H1 (cell line): ENCODE measurements at regions of chr1 and their contacts with region 1.

Region 1: DNA sequence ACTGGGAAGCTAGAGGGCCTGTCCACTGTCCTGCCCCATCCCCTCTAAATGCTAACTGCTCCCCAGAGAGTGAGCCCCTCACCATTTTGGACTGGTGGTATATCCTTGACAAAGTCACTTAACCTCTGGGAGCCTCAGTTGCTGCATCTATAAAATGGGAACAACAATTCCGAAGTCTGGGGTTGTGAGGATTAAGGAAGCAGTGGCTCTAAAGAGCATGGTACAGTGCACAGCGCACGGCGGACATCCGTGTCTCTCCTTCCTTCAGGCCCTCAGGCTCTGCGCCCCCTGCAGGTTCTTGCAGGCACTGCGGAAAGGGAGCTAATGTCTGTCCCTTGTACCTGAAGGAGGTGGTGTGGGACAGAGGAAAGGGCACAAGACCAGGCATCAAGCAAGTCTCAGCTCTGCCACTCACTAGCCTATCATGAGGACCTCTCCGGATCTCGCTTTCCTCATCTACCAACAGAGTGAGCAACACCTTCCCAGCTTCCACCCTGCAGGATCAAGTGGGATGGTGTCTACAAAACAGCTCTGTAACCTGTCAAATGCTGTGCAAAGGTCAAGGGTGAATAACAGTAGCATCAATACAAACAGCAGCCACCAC is 20.1 kb downstream of the ECE1 start:
- DNase-seq: peak; percentile 63 to 99
- H3K4me3 ChIP-seq: no peak overlapping the region
- H3K27ac ChIP-seq: no peak overlapping the region
- H3K4me1 ChIP-seq: no peaks in the 10 kb centered on the region; a peak in 2 of 7 replicates
- H3K27me3 ChIP-seq: no peaks in the 10 kb centered on the region
- CTCF ChIP-seq: peak; percentile 99 to 100 (median 100)
- EP300 ChIP-seq: no peak
- POLR2A ChIP-seq: no peak
- RAD21 ChIP-seq: peak; percentile 79 to 84

Region 2: DNA sequence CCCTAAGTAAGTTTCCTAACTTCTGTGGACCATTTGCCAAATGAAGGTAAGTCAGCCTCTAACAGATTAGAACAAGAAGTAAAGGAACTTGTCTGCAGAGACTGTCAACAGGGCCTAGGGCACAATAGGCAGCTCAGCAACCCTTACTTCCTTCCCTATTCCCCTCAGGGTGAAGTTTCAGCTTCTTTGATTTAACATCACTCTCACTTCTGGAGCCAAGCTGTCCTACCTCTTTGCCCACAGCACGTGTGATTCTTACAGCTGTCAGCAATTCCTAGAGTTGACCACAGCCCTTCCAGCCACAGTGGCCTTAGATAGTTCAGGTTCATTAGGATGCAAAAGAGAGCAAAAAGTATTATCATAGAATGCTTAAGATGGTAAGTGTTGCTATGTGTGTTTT is 85.9 kb before region 1 on chr1:
- CTCF ChIA-PET with region 1: no interaction called
- POLR2A ChIA-PET with region 1: no interaction called
- DNase-seq: no peak
- H3K4me3 ChIP-seq: no peak overlapping the region
- H3K27ac ChIP-seq: no peak overlapping the region
- H3K4me1 ChIP-seq: no peaks in the 10 kb centered on the region
- H3K27me3 ChIP-seq: peaks cover 28 to 59% (median 52%) of the 10 kb centered on the region in 4 experiments
- CTCF ChIP-seq: no peak
- EP300 ChIP-seq: no peak
- POLR2A ChIP-seq: no peak
- RAD21 ChIP-seq: no peak

Region 3: DNA sequence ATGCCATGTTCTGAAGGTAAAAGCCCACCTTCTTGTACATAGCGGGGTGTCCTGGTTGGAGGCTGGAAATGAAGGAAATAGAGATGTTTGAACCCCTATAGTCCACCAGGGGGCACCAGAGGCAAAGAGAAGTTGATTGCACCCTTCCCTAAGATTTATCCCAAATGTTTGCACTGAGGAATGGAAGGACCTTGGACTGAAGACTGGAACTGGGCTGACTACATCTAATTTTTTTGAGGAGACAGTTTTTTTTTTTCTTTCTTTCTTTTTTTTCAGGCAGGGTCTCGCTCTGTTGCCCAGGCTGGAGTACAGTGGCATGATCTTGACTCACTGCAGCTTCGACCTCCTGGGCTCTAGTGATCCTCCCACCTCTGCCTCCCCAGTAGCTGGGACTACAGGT is 38.1 kb before region 1 on chr1:
- CTCF ChIA-PET with region 1: interaction called, 67 read pairs
- POLR2A ChIA-PET with region 1: no interaction called
- DNase-seq: peak in 1 of 2 experiments; percentile 59
- H3K4me3 ChIP-seq: no peak overlapping the region
- H3K27ac ChIP-seq: no peak overlapping the region
- H3K4me1 ChIP-seq: no peaks in the 10 kb centered on the region
- H3K27me3 ChIP-seq: no peaks in the 10 kb centered on the region
- CTCF ChIP-seq: peak; percentile 25 to 75 (median 75)
- EP300 ChIP-seq: no peak
- POLR2A ChIP-seq: no peak
- RAD21 ChIP-seq: peak; percentile 89 to 90

Region 4: DNA sequence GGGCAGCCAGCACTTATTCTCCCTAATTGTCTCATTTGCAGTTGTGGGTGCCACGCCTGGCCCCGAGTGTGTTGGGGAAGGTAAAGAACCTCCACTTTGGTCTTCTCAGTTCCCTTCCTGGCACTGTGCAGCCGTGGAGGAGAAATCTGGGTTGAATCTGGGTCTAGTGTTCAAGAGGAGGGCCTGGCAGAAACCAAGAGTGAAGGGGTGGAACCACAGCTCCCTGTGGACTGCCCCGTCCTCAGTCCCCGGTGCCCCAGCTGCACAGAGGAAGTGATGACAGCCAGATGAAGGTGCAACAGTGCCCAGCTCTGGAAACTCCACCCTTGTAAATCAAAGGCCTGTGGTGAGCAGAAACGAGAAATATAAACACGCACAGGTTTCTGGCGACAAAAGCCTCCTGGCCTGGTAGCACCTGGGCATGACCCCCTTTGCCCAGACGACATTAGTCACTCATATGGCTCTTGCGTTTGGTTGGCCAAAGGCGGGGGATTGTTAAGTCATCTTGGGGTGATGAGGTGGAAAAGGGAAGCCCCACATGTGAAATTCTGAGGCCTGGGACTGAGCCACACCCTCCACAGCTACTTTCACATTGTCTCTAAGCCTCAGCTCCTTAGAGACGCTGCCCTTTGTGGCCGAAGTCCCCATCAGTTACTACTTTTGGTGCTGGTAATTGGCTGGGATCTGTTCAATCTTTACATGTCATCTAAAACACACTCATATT is 24.2 kb after region 1 on chr1:
- CTCF ChIA-PET with region 1: interaction called, 73 read pairs
- POLR2A ChIA-PET with region 1: interaction called, 3 read pairs
- DNase-seq: no peak
- H3K4me3 ChIP-seq: no peak overlapping the region
- H3K27ac ChIP-seq: no peak overlapping the region
- H3K4me1 ChIP-seq: peaks cover 0 to 18% (median 14%) of the 10 kb centered on the region in 4 experiments; a peak in 6 of 7 replicates
- H3K27me3 ChIP-seq: no peaks in the 10 kb centered on the region
- CTCF ChIP-seq: no peak
- EP300 ChIP-seq: no peak
- POLR2A ChIP-seq: no peak
- RAD21 ChIP-seq: no peak

Region 5: GRCh38 chr1:21324368-21325141 is 54.4 kb after region 1 on chr1:
- CTCF ChIA-PET with region 1: interaction called, 152 read pairs
- POLR2A ChIA-PET with region 1: no interaction called
- DNase-seq: no peak
- H3K4me3 ChIP-seq: no peak overlapping the region
- H3K27ac ChIP-seq: peak overlapping the region; percentile 14; the same call in 1 of the 2 replicates
- H3K4me1 ChIP-seq: peaks cover 24 to 72% (median 55%) of the 10 kb centered on the region in 4 experiments
- H3K27me3 ChIP-seq: no peaks in the 10 kb centered on the region
- CTCF ChIP-seq: no peak
- EP300 ChIP-seq: no peak
- POLR2A ChIP-seq: no peak
- RAD21 ChIP-seq: no peak

Region 6: GRCh38 chr1:21350187-21350885 is 80.1 kb after region 1 on chr1:
- CTCF ChIA-PET with region 1: interaction called, 64 read pairs
- POLR2A ChIA-PET with region 1: no interaction called
- DNase-seq: no peak
- H3K4me3 ChIP-seq: no peak overlapping the region
- H3K27ac ChIP-seq: no peak overlapping the region
- H3K4me1 ChIP-seq: peaks cover 2 to 6% (median 4%) of the 10 kb centered on the region in 4 experiments; a peak in 6 of 7 replicates
- H3K27me3 ChIP-seq: peaks cover 0 to 6% (median 1%) of the 10 kb centered on the region in 4 experiments; a peak in 4 of 7 replicates
- CTCF ChIP-seq: no peak
- EP300 ChIP-seq: no peak
- POLR2A ChIP-seq: no peak
- RAD21 ChIP-seq: no peak

Region 7: GRCh38 chr1:21378705-21379494 is 108.7 kb after region 1 on chr1:
- CTCF ChIA-PET with region 1: interaction called, 11 read pairs
- POLR2A ChIA-PET with region 1: no interaction called
- DNase-seq: no peak
- H3K4me3 ChIP-seq: no peak overlapping the region
- H3K27ac ChIP-seq: no peak overlapping the region
- H3K4me1 ChIP-seq: peaks cover 0 to 3% (median 3%) of the 10 kb centered on the region in 4 experiments; a peak in 3 of 7 replicates
- H3K27me3 ChIP-seq: no peaks in the 10 kb centered on the region
- CTCF ChIP-seq: no peak
- EP300 ChIP-seq: no peak
- POLR2A ChIP-seq: no peak
- RAD21 ChIP-seq: no peak

Region 8: GRCh38 chr1:21439721-21440629 is 169.8 kb after region 1 on chr1 and contains the start of gene NBPF3:
- CTCF ChIA-PET with region 1: no interaction called
- POLR2A ChIA-PET with region 1: no interaction called
- DNase-seq: peak; percentile 67 to 89
- H3K4me3 ChIP-seq: peak within 1 kb of the TSS; percentile 55 to 72 (median 61)
- H3K27ac ChIP-seq: no peak within 1 kb of the TSS; the same call in 1 of the 2 replicates
- H3K4me1 ChIP-seq: peaks cover 0 to 5% (median 3%) of the 10 kb centered on the region in 4 experiments; a peak in 3 of 7 replicates
- H3K27me3 ChIP-seq: peaks cover 0 to 30% (median 17%) of the 10 kb centered on the region in 4 experiments; a peak in 6 of 7 replicates
- CTCF ChIP-seq: no peak
- EP300 ChIP-seq: no peak
- POLR2A ChIP-seq: no peak
- RAD21 ChIP-seq: no peak
- total RNA-seq, gene NBPF3: 4.1 and 4.3 TPM in 2 replicates